ENCODE measurements at regions of chr19 and their contacts with region 1.

Region 1: DNA sequence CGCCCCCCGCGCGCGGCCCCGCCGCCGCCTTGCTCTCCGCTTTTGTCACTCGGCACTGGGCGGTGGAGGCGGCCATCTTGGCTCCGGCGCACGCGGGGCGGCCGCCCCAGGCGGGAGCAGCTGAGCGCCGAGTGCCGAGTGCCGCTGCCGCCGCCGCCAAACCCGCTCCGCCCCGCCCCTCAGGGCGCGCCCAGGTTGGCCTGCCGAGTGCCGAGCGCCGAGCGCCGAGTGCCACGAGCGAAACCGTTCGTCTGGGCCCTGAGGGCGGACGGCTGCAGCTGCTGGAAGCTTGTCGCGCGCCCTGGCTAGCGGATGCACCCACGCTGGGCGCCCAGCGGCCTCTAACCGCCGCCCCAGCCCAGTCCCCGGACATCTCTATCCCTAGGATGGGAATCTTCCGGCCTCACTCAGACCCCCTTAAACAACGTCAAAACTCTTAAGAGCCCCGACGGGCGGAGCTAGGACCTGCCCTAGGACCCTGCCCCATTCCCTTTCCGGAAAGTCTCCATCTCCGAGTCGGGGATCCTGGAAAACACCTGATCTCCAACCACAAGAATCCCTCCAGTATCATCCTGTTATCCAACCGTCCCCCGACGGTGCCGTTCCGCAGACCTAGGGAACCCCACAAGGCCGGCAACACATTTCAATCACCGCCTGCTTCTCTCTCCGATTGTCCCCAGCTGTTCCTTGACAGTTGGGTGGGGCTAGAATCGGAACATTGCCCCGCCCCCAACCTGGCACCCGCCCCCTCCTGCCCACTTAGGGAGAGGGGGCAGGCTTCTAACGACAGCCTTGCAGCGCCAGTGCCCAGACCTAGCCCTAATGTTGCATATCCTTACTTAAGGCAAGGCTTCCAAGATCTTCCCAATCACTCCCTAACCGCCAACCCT is 14.1 kb upstream of the AKAP8L start:
- DNase-seq: peak; percentile 96 to 98
- ATAC-seq: peak; percentile 96
- H3K4me3 ChIP-seq: peak overlapping the region; percentile 46 to 80
- H3K27ac ChIP-seq: peak overlapping the region; percentile 10 to 84
- H3K4me1 ChIP-seq: no peaks in the 10 kb centered on the region
- H3K27me3 ChIP-seq: no peaks in the 10 kb centered on the region

Region 2: DNA sequence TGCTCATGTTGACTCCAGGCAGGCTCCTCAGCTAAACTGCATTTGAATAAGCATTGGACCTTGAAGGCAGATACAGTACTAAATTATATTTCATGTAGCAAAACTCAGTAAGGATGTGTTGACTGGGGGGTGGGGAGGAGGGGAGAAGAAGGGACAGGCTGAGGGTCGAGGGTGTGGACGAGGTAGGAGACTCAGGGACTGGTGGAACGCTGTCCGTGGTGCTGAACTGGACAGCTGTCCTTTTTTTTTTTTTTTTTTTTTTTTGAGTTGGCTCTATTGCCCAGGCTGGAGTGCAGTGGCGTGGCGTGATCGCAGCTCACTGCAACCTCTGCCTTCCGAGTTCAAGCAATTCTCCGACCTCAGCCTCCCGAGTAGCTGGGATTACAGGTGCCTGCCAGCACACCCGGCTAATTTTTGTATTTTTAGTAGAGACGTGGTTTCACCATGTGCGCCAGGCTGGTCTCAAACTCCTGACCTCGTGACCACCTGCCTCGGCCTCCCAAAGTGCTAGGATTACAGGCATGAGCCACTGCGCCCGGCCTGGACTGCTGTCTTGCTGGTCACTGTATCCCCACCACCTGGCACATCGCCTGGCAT is 416.8 kb before region 1 on chr19:
- intact Hi-C with region 1: no loop called
- DNase-seq: no peak
- ATAC-seq: no peak
- H3K4me3 ChIP-seq: no peak overlapping the region
- H3K27ac ChIP-seq: no peak overlapping the region
- H3K4me1 ChIP-seq: no peaks in the 10 kb centered on the region
- H3K27me3 ChIP-seq: peaks cover 0 to 1% of the 10 kb centered on the region in 2 donors

Region 3: GRCh38 chr19:15177269-15178116 is 255.4 kb before region 1 on chr19:
- intact Hi-C with region 1: loop called in 1 of 2 experiments (anchors 5 kb)
- DNase-seq: peak; percentile 89 to 95
- ATAC-seq: peak; percentile 94
- H3K4me3 ChIP-seq: no peak overlapping the region
- H3K27ac ChIP-seq: peak overlapping the region in 1 of 2 donors; percentile 11
- H3K4me1 ChIP-seq: no peaks in the 10 kb centered on the region
- H3K27me3 ChIP-seq: no peaks in the 10 kb centered on the region